Aorta (tissue), 5 donors: ENCODE measurements at regions of chr9 and their contacts with region 1.

Region 1: GRCh38 chr9:109914280-109915027 is 134.5 kb downstream of the PALM2AKAP2 start:
- DNase-seq: no peak
- ATAC-seq: no peak
- H3K4me3 ChIP-seq: no peak overlapping the region
- H3K27ac ChIP-seq: no peak overlapping the region
- H3K4me1 ChIP-seq: peaks cover 7 to 9% of the 10 kb centered on the region in 2 donors
- H3K27me3 ChIP-seq: no peaks in the 10 kb centered on the region

Region 2: GRCh38 chr9:109956717-109957440 is 42.4 kb after region 1 on chr9:
- intact Hi-C with region 1: loop called in 1 of 2 experiments (anchors 5 kb)
- DNase-seq: no peak
- ATAC-seq: no peak
- H3K4me3 ChIP-seq: peak overlapping the region in 1 of 2 donors; percentile 10
- H3K27ac ChIP-seq: peak overlapping the region; percentile 43 to 51
- H3K4me1 ChIP-seq: peaks cover 3 to 5% of the 10 kb centered on the region in 2 donors
- H3K27me3 ChIP-seq: no peaks in the 10 kb centered on the region

Region 3: GRCh38 chr9:110007477-110008270 is 93.2 kb after region 1 on chr9:
- intact Hi-C with region 1: no loop called
- DNase-seq: no peak
- ATAC-seq: no peak
- H3K4me3 ChIP-seq: no peak overlapping the region
- H3K27ac ChIP-seq: no peak overlapping the region
- H3K4me1 ChIP-seq: no peaks in the 10 kb centered on the region
- H3K27me3 ChIP-seq: no peaks in the 10 kb centered on the region

Region 4: GRCh38 chr9:110065532-110065931 is 151.1 kb after region 1 on chr9:
- intact Hi-C with region 1: no loop called
- DNase-seq: no peak
- ATAC-seq: no peak
- H3K4me3 ChIP-seq: no peak overlapping the region
- H3K27ac ChIP-seq: no peak overlapping the region
- H3K4me1 ChIP-seq: no peaks in the 10 kb centered on the region
- H3K27me3 ChIP-seq: no peaks in the 10 kb centered on the region